ENCODE measurements at regions of chr12 and their contacts with region 1.

Region 1: GRCh38 chr12:7933255-7933729 is 2.7 kb downstream of the SLC2A3 start:
- DNase-seq: peak; percentile 93
- ATAC-seq: peak; percentile 96
- H3K4me3 ChIP-seq: peak overlapping the region; percentile 84 to 99 (median 84)
- H3K27ac ChIP-seq: peak overlapping the region; percentile 75
- H3K4me1 ChIP-seq: peaks cover 65% of the 10 kb centered on the region
- H3K27me3 ChIP-seq: no peaks in the 10 kb centered on the region; a peak in 1 of 5 replicates
- CTCF ChIP-seq: peak; percentile 82
- EP300 ChIP-seq: no peak
- POLR2A ChIP-seq: no peak
- RAD21 ChIP-seq: peak; percentile 78

Region 2: GRCh38 chr12:7853557-7853956 is 79.7 kb before region 1 on chr12:
- CTCF ChIA-PET with region 1: interaction called, 3 read pairs
- POLR2A ChIA-PET with region 1: interaction called, 4 read pairs
- in situ Hi-C with region 1: loop called (anchors 10 kb)
- intact Hi-C with region 1: loop called (anchors 5 kb)
- DNase-seq: no peak
- ATAC-seq: no peak
- H3K4me3 ChIP-seq: no peak overlapping the region
- H3K27ac ChIP-seq: no peak overlapping the region
- H3K4me1 ChIP-seq: peaks cover 86% of the 10 kb centered on the region
- H3K27me3 ChIP-seq: no peaks in the 10 kb centered on the region
- CTCF ChIP-seq: no peak
- EP300 ChIP-seq: no peak
- POLR2A ChIP-seq: no peak
- RAD21 ChIP-seq: no peak

Region 3: DNA sequence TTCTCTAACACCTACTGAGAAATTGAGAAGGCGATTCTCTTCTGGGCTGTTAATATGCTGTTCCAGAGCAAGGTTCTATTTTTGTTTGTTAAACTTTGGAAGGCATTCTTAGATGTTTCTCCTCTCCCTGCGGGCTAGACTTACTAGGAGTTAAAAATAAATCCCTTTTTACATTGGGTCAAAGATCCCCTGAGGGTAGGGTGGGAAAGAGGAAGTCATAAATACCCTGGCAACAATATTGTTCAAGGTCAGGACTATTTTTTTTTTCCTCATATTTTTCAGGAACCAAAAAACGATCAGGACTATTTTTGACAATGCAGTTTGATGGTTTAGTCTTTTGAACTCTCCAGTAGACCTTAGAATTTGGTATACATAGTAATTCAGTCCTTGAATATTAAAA is 48.6 kb before region 1 on chr12:
- CTCF ChIA-PET with region 1: no interaction called
- POLR2A ChIA-PET with region 1: interaction called, 10 read pairs
- in situ Hi-C with region 1: no loop called
- intact Hi-C with region 1: no loop called
- DNase-seq: no peak
- ATAC-seq: no peak
- H3K4me3 ChIP-seq: peak overlapping the region in 1 of 3 experiments; percentile 12; a peak in 1 of 6 replicates
- H3K27ac ChIP-seq: peak overlapping the region; percentile 48
- H3K4me1 ChIP-seq: peaks cover 79% of the 10 kb centered on the region
- H3K27me3 ChIP-seq: no peaks in the 10 kb centered on the region
- CTCF ChIP-seq: no peak
- EP300 ChIP-seq: no peak
- POLR2A ChIP-seq: no peak
- RAD21 ChIP-seq: no peak

Region 4: GRCh38 chr12:7907009-7907408 is 26.3 kb before region 1 on chr12:
- CTCF ChIA-PET with region 1: interaction called, 4 read pairs
- POLR2A ChIA-PET with region 1: interaction called, 7 read pairs
- in situ Hi-C with region 1: no loop called
- intact Hi-C with region 1: loop called (anchors 2 kb)
- DNase-seq: peak; percentile 97
- ATAC-seq: peak; percentile 97
- H3K4me3 ChIP-seq: no peak overlapping the region
- H3K27ac ChIP-seq: peak overlapping the region; percentile 78
- H3K4me1 ChIP-seq: peaks cover 48% of the 10 kb centered on the region
- H3K27me3 ChIP-seq: no peaks in the 10 kb centered on the region
- CTCF ChIP-seq: peak; percentile 82
- EP300 ChIP-seq: peak in 1 of 2 experiments; percentile 90; a peak in 2 of 4 replicates
- POLR2A ChIP-seq: no peak
- RAD21 ChIP-seq: no peak

Region 5: GRCh38 chr12:7995266-7995963 is 62.1 kb after region 1 on chr12:
- CTCF ChIA-PET with region 1: interaction called, 12 read pairs
- POLR2A ChIA-PET with region 1: no interaction called
- in situ Hi-C with region 1: loop called (anchors 10 kb)
- intact Hi-C with region 1: loop called (anchors 1 kb)
- DNase-seq: peak; percentile 77
- ATAC-seq: peak; percentile 100
- H3K4me3 ChIP-seq: no peak overlapping the region
- H3K27ac ChIP-seq: no peak overlapping the region
- H3K4me1 ChIP-seq: peaks cover 31% of the 10 kb centered on the region
- H3K27me3 ChIP-seq: no peaks in the 10 kb centered on the region
- CTCF ChIP-seq: peak; percentile 82
- EP300 ChIP-seq: no peak
- POLR2A ChIP-seq: no peak
- RAD21 ChIP-seq: peak; percentile 87